H1 (cell line): ENCODE measurements at regions of chr10 and their contacts with region 1.

Region 1: DNA sequence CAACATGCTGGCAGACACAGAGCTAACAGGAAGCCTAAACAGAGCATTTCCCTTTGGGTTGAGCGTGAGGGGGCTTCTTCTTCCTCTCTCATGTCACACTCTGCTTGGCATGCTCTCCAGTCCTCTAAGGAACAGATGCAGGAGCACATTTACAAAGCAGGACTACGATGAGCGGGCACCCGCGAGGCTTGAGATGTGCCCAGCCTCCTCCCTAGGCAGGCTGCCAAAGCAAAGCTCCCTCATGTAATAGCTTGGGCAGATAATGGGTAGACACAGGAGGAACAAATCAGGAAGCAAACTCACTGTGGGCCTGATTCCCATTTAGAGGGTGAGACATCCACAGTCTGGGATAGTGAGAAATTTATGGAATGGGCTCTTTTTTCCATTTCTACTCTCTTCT is 519.1 kb downstream of the NRG3 start:
- DNase-seq: no peak
- H3K4me3 ChIP-seq: no peak overlapping the region
- H3K27ac ChIP-seq: no peak overlapping the region
- H3K4me1 ChIP-seq: peaks cover 0 to 5% (median 2%) of the 10 kb centered on the region in 4 experiments; a peak in 1 of 7 replicates
- H3K27me3 ChIP-seq: no peaks in the 10 kb centered on the region
- CTCF ChIP-seq: no peak
- EP300 ChIP-seq: no peak
- POLR2A ChIP-seq: no peak
- RAD21 ChIP-seq: no peak

Region 2: GRCh38 chr10:82377608-82378007 is 16.5 kb before region 1 on chr10:
- CTCF ChIA-PET with region 1: interaction called, 29 read pairs
- POLR2A ChIA-PET with region 1: no interaction called
- DNase-seq: peak in 1 of 2 experiments; percentile 53
- H3K4me3 ChIP-seq: no peak overlapping the region
- H3K27ac ChIP-seq: no peak overlapping the region
- H3K4me1 ChIP-seq: no peaks in the 10 kb centered on the region
- H3K27me3 ChIP-seq: no peaks in the 10 kb centered on the region
- CTCF ChIP-seq: peak in 2 of 3 experiments; percentile 50 to 51; a peak in 3 of 4 replicates
- EP300 ChIP-seq: no peak
- POLR2A ChIP-seq: no peak
- RAD21 ChIP-seq: peak; percentile 61 to 73